Right cardiac atrium (tissue), 5 donors: ENCODE measurements at regions of chr5 and their contacts with region 1.

Region 1: DNA sequence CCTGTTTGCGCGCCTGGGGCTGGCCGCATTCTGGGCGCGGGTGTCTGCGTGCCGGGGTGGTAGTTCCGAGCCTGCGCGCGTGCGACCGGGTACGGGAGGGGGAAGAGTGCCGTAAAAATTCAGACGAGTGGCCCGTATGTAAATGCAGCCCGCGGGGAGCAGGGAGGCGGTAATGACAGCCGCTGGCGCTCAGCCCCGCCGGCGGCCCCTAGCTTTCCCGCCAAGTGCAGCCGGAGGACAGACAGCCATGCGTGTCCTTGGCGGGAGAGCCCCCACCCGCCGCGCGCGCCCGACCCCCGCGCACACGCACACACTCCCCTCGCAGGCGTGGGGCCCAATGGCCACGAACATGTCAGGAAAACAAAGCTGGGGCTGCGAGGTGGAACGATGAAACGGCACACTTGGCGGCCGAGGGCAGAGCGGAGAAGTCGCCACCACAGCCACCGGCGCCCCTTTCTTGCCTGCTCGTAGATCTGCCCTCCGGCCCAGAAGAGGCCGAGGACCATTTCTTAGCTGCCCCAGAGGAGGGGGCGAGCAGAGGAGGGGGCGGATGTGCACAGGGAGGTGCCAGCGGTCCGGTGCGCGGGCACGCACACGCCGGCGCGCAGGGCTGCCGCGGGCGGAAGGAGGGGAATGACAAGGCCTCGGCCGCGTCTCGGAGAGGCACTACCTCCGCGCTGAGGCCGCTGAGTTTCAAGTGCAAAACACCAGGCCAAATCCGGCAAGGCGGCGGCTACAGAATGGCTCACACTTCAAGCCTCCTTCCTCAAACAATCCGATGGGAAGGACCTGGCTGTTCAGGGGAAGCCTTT is 208.4 kb downstream of the MEF2C start:
- DNase-seq: peak in 2 of 3 donors; percentile 55 to 57
- ATAC-seq: peak; percentile 45 to 66
- H3K4me3 ChIP-seq: peak overlapping the region; percentile 37
- H3K27ac ChIP-seq: no peak overlapping the region
- H3K4me1 ChIP-seq: peaks cover 4% of the 10 kb centered on the region
- H3K27me3 ChIP-seq: peaks cover 7% of the 10 kb centered on the region

Region 2: DNA sequence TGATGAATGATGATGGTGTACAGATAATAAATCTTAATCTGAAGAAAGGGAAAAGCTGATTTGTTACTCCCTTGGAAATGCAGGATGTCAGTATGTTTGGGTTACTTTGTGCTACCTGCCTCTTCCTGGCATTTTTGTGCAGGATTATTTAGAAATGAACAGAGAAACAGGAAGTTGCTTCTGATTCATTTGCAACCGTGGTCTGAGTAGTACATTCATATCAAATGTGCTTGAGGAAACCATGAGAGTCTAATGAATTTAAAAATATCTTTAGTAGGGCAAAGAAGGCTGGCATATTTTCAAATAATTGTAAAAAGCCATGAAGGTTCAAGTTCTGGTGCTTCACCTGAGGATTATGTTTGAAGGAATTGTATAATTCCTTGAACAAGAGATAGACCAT is 797.5 kb before region 1 on chr5:
- intact Hi-C with region 1: loop called in 1 of 4 experiments (anchors 5 kb)
- DNase-seq: no peak
- ATAC-seq: no peak
- H3K4me3 ChIP-seq: no peak overlapping the region
- H3K27ac ChIP-seq: no peak overlapping the region
- H3K4me1 ChIP-seq: no peaks in the 10 kb centered on the region
- H3K27me3 ChIP-seq: no peaks in the 10 kb centered on the region